Activated naive CD4-positive, alpha-beta T cell treated with anti-CD3 and anti-CD28 coated beads, Interleukin-2, amount 10 ng/mL, durations not matched to agents 7 days and 5 days (primary cell): ENCODE measurements at regions of chr2 and their contacts with region 1.

Region 1: GRCh38 chr2:37389989-37390765 is 45.7 kb downstream of the QPCT start:
- DNase-seq: peak; percentile 70
- H3K4me3 Mint-ChIP-seq: no peak overlapping the region
- H3K27ac Mint-ChIP-seq: peak overlapping the region; percentile 81
- H3K4me1 Mint-ChIP-seq: no peaks in the 10 kb centered on the region
- H3K27me3 Mint-ChIP-seq: peaks cover 23% of the 10 kb centered on the region

Region 2: GRCh38 chr2:37376421-37377186 is 13.6 kb before region 1 on chr2:
- CTCF ChIA-PET with region 1: interaction called, 38 read pairs
- DNase-seq: peak; percentile 59
- H3K4me3 Mint-ChIP-seq: peak overlapping the region; percentile 23
- H3K27ac Mint-ChIP-seq: peak overlapping the region; percentile 45
- H3K4me1 Mint-ChIP-seq: peaks cover 32% of the 10 kb centered on the region
- H3K27me3 Mint-ChIP-seq: peaks cover 73% of the 10 kb centered on the region

Region 3: DNA sequence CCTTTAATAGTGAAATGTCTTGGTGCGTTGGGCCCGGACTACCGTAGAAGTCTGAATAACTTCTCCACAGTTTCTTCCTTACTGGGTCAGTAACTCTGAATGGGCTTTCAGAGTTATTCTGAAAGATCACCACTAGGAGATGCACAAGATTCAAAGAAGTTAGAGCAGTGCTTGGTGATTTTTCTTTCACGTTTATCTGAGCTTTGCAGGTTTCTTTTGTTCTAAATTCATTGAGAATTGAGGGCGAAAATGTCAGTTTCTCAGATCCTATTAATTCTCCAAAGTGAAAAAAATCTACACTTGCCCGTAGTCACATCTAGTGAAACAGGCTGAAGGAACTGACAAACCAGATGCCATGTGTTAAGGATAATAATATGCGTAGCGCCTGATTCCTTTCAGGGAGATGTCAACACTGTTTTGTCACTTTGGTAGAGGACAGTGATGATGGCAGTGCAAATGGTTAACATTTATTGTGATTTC is 24.3 kb after region 1 on chr2:
- CTCF ChIA-PET with region 1: interaction called, 19 read pairs
- DNase-seq: no peak
- H3K4me3 Mint-ChIP-seq: no peak overlapping the region
- H3K27ac Mint-ChIP-seq: no peak overlapping the region
- H3K4me1 Mint-ChIP-seq: no peaks in the 10 kb centered on the region
- H3K27me3 Mint-ChIP-seq: peaks cover 39% of the 10 kb centered on the region

Region 4: GRCh38 chr2:37832590-37833197 is 442.5 kb after region 1 on chr2:
- CTCF ChIA-PET with region 1: interaction called, 40 read pairs
- DNase-seq: peak; percentile 87
- H3K4me3 Mint-ChIP-seq: no peak overlapping the region
- H3K27ac Mint-ChIP-seq: no peak overlapping the region
- H3K4me1 Mint-ChIP-seq: peaks cover 16% of the 10 kb centered on the region
- H3K27me3 Mint-ChIP-seq: peaks cover 7% of the 10 kb centered on the region

Region 5: GRCh38 chr2:37896314-37896713 is 506.1 kb after region 1 on chr2:
- CTCF ChIA-PET with region 1: interaction called, 12 read pairs
- DNase-seq: no peak
- H3K4me3 Mint-ChIP-seq: no peak overlapping the region
- H3K27ac Mint-ChIP-seq: no peak overlapping the region
- H3K4me1 Mint-ChIP-seq: peaks cover 30% of the 10 kb centered on the region
- H3K27me3 Mint-ChIP-seq: peaks cover 4% of the 10 kb centered on the region